PC-3 (cell line): ENCODE measurements at regions of chr2 and their contacts with region 1.

Region 1: DNA sequence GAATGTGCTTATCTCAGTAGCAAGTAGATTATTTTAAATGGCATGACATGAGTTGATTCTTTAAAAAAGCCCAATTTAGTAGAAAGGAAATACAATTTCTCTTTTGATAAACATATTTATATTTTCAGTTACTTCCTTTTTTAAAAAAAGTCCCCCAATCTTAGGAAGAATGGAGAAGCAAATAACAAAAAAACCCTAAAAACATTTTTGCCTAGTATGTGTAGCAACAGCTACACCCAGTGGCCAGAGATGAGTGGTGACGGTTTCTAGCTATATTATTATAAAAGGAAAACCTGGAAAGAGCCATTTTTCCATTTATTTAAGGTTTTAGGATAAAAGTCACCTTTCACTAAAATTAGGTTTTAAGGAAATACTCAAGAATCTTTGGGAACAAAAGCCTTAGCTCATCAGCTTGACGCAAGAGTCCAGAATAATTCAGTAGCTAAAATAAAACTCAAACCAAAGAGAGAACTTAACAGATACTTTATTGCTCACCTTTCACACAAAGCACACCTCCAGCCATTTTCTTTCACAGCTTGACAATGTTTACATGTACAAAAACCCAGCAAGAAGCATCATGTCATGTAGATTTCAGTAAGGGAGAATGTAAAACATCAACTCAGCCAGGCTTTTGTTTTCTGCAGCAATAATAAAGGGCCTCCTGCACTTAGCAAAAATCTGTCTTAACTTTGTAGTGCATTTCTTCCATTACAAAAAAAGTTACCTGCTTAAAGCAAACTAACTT is 15.7 kb downstream of the FAM98A start:
- DNase-seq: peak; percentile 60
- ATAC-seq: no peak
- H3K4me3 ChIP-seq: no peak overlapping the region
- H3K27ac ChIP-seq: no peak overlapping the region
- H3K4me1 ChIP-seq: no peaks in the 10 kb centered on the region
- H3K27me3 ChIP-seq: no peaks in the 10 kb centered on the region
- CTCF ChIP-seq: peak; percentile 91

Region 2: DNA sequence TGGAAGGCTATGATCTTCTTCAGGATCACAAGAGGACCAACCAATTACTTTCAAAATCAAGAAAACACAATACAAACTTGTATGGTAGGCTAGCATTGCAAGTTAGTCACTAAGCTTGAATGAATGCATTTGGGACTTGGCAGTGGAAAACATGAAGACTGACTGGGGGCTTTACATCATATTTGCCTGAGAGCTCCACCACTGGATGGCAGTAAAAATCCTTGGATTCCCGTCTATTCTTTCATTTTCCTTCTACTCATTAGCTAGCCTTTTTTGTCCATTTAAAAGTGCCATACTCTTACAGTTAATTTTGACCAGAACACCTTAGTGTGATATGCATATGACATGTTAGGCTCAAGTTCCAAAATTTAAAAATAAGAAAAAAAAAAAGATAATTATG is 170.4 kb before region 1 on chr2:
- CTCF ChIA-PET with region 1: interaction called, 26 read pairs
- POLR2A ChIA-PET with region 1: no interaction called
- intact Hi-C with region 1: loop called (anchors 1 kb)
- DNase-seq: peak; percentile 73
- ATAC-seq: peak; percentile 72
- H3K4me3 ChIP-seq: no peak overlapping the region
- H3K27ac ChIP-seq: no peak overlapping the region
- H3K4me1 ChIP-seq: peaks cover 7% of the 10 kb centered on the region
- H3K27me3 ChIP-seq: no peaks in the 10 kb centered on the region
- CTCF ChIP-seq: peak; percentile 82

Region 3: DNA sequence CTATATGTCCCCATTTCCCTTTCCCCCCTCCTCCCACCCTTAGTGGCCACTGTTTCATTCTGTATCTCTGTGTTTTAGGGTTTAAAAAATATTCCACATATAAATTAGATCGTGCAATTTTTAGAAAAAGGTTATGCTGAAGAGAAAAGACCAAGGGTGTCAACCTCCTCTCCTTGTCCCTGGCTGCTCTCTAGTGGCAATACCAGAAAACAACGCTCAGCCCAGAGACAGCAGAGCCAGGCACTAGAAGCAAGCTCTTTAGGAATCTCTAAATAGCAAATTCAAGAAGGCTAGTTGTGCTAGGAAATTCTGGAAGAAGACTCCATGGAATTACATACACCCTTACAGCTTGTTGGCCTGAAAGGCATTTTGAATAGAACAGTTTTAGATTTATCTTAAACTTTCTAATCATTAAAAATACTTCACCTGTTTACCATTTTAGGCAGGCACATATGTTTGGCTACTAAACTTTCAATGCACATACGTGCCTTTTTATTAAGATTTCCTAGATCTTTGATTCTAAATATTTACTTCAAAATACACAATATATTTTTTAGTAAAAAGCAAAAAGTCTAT is 142.0 kb before region 1 on chr2:
- CTCF ChIA-PET with region 1: interaction called, 7 read pairs
- POLR2A ChIA-PET with region 1: no interaction called
- intact Hi-C with region 1: loop called (anchors 1 kb)
- DNase-seq: peak; percentile 68
- ATAC-seq: peak; percentile 90
- H3K4me3 ChIP-seq: no peak overlapping the region
- H3K27ac ChIP-seq: no peak overlapping the region
- H3K4me1 ChIP-seq: peaks cover 16% of the 10 kb centered on the region
- H3K27me3 ChIP-seq: no peaks in the 10 kb centered on the region
- CTCF ChIP-seq: peak; percentile 85

Region 4: GRCh38 chr2:33475224-33476130 is 107.9 kb before region 1 on chr2:
- CTCF ChIA-PET with region 1: interaction called, 5 read pairs
- POLR2A ChIA-PET with region 1: no interaction called
- intact Hi-C with region 1: loop called (anchors 2 kb)
- DNase-seq: peak; percentile 80
- ATAC-seq: peak; percentile 78
- H3K4me3 ChIP-seq: peak overlapping the region; percentile 84
- H3K27ac ChIP-seq: peak overlapping the region; percentile 53
- H3K4me1 ChIP-seq: peaks cover 10% of the 10 kb centered on the region; the same call in 1 of the 2 replicates
- H3K27me3 ChIP-seq: no peaks in the 10 kb centered on the region
- CTCF ChIP-seq: peak; percentile 90

Region 5: DNA sequence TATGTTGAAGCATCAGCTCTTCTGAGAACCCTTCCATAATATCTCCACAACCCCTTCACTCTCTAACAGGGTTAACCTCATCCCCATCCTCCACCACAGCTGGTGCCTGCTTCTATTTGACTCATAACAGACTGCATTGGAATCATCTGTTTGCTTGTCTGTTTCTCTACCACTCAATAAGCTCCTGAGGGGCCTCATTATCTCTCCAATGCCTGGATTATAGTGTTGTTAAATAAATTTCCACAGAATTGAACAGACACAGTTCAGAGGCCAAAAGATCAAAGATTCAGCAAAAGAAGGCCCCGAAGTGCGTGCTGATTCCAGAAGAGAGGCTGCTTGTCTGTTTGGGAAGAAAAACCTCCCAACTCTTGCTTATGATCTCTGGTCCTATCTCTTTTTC is 49.5 kb after region 1 on chr2:
- CTCF ChIA-PET with region 1: no interaction called
- POLR2A ChIA-PET with region 1: no interaction called
- intact Hi-C with region 1: no loop called
- DNase-seq: no peak
- ATAC-seq: no peak
- H3K4me3 ChIP-seq: no peak overlapping the region
- H3K27ac ChIP-seq: no peak overlapping the region
- H3K4me1 ChIP-seq: peaks cover 6% of the 10 kb centered on the region; the same call in 1 of the 2 replicates
- H3K27me3 ChIP-seq: no peaks in the 10 kb centered on the region
- CTCF ChIP-seq: no peak